Cardiac septum (tissue), 1 donor: ENCODE measurements at regions of chr10 and their contacts with region 1.

Region 1: GRCh38 chr10:72692057-72692910 is at the start of gene MCU:
- DNase-seq: peak; percentile 97
- total RNA-seq, gene MCU: 14.6 TPM

Region 2: GRCh38 chr10:72364239-72364777 is 328.0 kb before region 1 on chr10:
- intact Hi-C with region 1: loop called (anchors 5 kb)
- DNase-seq: peak; percentile 95

Region 3: GRCh38 chr10:72625608-72626443 is 66.5 kb before region 1 on chr10 and contains the start of gene MICU1:
- intact Hi-C with region 1: loop called (anchors 5 kb)
- DNase-seq: peak; percentile 98
- total RNA-seq, gene MICU1: 43.2 TPM

Region 4: GRCh38 chr10:72736176-72736827 is 44.0 kb after region 1 on chr10:
- intact Hi-C with region 1: loop called (anchors 5 kb)
- DNase-seq: no peak

Region 5: GRCh38 chr10:72834183-72834825 is 142.0 kb after region 1 on chr10:
- intact Hi-C with region 1: loop called (anchors 2 kb)
- DNase-seq: no peak